Psoas muscle (tissue), 8 donors: ENCODE measurements at regions of chr1 and their contacts with region 1.

Region 1: DNA sequence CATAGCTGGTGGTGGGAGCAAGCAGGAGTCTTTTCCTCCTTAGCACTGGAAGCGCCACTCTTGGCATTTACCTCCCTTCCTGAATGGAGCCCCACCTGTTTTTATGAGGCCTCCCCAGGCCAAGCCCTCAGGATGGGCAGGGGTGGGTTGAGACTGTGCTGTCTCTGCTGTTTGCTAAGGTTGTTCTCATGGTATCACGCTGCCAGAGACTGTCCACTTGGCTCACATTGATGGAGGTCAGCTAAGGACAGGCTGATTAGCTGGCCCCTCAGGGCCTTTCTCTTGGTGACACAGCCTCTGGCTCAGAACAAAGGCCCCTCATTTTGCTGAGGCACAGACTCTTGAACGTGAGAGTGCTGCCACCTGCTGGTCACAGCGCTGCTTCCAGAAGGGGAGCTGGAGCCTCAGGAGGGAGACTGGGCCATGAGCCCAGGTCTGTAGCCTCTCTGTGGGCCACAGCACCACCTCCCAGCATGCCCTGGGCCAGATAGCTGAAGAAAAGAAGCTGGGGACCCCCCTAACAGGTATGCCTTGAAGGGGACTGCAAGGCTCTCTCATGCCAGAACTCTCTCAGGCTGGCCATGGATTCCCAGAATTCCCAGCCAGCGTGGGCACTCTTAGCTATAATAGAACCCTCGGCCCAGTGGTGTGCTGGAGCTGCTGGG is 85.6 kb downstream of the CD58 start:
- DNase-seq: peak; percentile 88 to 95
- ATAC-seq: peak; percentile 83 to 93 (median 87)
- H3K4me3 ChIP-seq: no peak overlapping the region
- H3K27ac ChIP-seq: no peak overlapping the region
- H3K4me1 ChIP-seq: peaks cover 14% of the 10 kb centered on the region
- H3K27me3 ChIP-seq: no peaks in the 10 kb centered on the region
- CTCF ChIP-seq: peak; percentile 96

Region 2: DNA sequence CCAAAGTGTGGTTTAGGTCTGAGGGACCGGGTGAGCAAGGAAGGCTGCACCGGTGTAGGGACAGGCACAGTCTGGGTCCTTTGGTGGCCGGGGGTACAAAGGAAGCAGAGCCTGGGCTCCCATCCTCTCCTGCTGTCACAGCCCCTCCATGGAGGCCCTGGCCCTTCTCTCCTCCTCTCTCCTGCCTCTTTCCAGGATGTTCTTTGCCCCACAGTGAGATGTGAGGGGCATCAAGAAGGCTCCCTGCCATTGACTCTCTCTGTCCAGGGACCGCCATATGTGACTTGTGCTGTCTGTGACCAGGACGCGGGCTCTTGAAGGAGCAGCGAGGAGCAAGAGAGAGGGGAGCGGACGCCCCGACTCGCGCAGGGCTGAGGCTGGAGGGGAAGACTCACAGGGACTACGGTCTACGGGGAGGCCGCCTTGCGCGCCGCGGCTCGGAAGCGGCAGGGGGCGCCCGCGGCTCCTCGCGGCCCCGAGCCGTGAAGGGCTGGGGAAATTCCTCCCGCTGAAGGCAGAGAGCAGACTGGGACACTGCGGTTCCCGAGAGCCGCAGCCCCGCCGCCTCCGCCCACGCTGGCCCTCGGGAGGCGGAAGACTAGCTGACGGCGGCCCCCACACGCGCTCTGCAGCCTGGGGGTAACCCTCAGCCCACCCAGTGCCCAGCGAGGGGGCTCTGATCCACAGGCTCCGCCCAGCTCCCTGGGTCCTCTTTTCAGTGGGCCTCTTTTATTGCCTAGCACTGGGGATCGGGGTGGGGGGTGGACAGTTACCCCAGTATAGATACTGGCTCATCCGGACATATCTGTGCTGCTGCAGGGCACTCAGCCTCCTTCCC is 333.2 kb before region 1 on chr1:
- intact Hi-C with region 1: loop called in 1 of 2 experiments (anchors 2 kb)
- DNase-seq: peak; percentile 81 to 84
- ATAC-seq: peak; percentile 95 to 100 (median 97)
- H3K4me3 ChIP-seq: peak overlapping the region; percentile 61
- H3K27ac ChIP-seq: peak overlapping the region; percentile 9
- H3K4me1 ChIP-seq: peaks cover 12% of the 10 kb centered on the region
- H3K27me3 ChIP-seq: no peaks in the 10 kb centered on the region
- CTCF ChIP-seq: peak; percentile 96

Region 3: GRCh38 chr1:116268204-116268603 is 217.0 kb before region 1 on chr1:
- intact Hi-C with region 1: loop called in 1 of 2 experiments (anchors 10 kb)
- DNase-seq: peak; percentile 48 to 61
- ATAC-seq: peak in 2 of 4 donors; percentile 31 to 53
- H3K4me3 ChIP-seq: no peak overlapping the region
- H3K27ac ChIP-seq: no peak overlapping the region
- H3K4me1 ChIP-seq: no peaks in the 10 kb centered on the region
- H3K27me3 ChIP-seq: no peaks in the 10 kb centered on the region
- CTCF ChIP-seq: no peak

Region 4: DNA sequence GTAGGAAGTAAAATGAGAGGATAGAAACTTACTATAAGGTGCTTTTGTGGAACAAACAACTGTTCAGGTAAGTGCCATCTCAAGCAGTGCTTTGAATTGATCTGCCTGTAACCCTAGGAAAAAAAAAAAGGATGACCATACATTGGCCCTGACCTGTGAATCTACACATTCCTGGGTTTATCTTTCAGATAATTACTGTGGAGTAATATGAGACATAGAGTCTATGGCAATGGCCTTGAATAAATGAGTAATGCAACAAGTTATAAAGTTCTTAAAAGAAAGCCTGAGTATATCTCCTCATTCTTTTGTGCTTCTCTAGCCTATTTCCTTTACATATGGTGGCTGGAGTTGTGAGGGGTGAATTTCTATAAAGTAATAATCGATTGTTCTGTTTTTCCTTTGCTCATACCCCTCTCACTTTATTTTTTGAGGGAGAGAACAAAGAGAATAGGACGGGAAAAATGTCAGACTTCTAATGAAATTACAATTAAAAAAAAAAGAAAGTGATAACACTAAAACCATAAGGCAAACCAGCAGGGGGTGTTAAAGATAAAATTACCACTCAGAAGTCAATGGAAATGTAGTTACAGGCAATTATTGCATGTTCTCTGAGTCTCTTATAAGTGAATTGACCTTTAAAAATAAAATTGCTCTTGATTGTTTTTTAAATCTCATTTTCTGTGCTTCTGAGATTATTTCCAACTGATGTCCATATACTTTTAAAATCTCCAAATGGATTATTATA is 124.6 kb before region 1 on chr1:
- intact Hi-C with region 1: loop called in 1 of 2 experiments (anchors 5 kb)
- DNase-seq: no peak
- ATAC-seq: peak in 1 of 4 donors; percentile 51
- H3K4me3 ChIP-seq: no peak overlapping the region
- H3K27ac ChIP-seq: no peak overlapping the region
- H3K4me1 ChIP-seq: peaks cover 4% of the 10 kb centered on the region
- H3K27me3 ChIP-seq: no peaks in the 10 kb centered on the region
- CTCF ChIP-seq: peak; percentile 39

Region 5: DNA sequence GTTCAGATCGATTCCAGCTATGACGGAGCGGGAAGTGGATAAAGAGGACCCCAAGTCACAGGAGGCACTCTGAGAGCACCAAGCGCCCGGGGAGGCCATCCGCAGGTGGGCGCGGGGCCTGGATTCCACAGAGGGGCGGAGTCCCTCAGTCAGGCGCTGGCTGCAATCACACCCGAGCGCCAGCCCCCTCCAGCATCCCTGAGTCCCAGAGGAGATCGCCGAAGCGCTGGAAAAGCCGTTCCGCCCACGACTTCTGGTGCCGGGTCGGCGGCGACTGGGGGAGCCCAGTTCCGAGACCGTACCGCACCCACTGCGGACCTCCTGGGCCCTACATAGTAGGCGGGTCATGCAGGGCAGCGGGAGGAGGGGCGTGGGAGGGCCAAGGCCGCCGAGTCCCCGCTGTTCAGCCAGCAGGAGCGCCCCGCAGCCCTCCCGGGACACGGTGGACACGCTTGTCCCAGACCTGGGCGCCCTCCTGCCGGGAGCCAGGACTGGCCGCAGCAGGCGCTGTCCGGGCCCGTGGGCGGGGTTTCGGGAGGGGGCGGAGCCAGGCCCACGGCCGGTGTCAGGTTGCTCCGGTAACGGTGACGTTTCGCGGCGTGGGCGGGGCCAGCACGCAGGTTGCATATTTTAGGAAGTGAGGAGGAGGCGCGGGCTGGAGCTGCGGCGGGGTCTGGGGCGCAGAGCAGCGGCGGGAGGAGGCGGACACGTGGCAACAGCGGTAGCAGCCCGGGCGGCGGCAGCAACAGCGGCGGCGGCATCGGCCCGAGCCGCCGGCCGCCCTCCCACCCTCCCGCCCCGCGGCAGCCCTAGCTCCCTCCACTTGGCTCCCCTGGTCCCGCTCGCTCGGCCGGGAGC is 112.4 kb before region 1 on chr1 and contains the start of gene ATP1A1:
- intact Hi-C with region 1: loop called in 1 of 2 experiments (anchors 5 kb)
- DNase-seq: peak; percentile 98
- ATAC-seq: peak; percentile 76 to 88 (median 80)
- H3K4me3 ChIP-seq: peak within 1 kb of the TSS; percentile 81
- H3K27ac ChIP-seq: peak within 1 kb of the TSS; percentile 89
- H3K4me1 ChIP-seq: peaks cover 49% of the 10 kb centered on the region
- H3K27me3 ChIP-seq: no peaks in the 10 kb centered on the region
- CTCF ChIP-seq: no peak
- total RNA-seq, gene ATP1A1: 66.1 to 342 (median 150) TPM

Region 6: GRCh38 chr1:116538544-116538943 is 53.3 kb after region 1 on chr1:
- intact Hi-C with region 1: no loop called
- DNase-seq: no peak
- ATAC-seq: peak in 1 of 4 donors; percentile 32
- H3K4me3 ChIP-seq: no peak overlapping the region
- H3K27ac ChIP-seq: no peak overlapping the region
- H3K4me1 ChIP-seq: no peaks in the 10 kb centered on the region
- H3K27me3 ChIP-seq: no peaks in the 10 kb centered on the region
- CTCF ChIP-seq: no peak